ENCODE measurements at regions of chr11 and their contacts with region 1.

Region 1: DNA sequence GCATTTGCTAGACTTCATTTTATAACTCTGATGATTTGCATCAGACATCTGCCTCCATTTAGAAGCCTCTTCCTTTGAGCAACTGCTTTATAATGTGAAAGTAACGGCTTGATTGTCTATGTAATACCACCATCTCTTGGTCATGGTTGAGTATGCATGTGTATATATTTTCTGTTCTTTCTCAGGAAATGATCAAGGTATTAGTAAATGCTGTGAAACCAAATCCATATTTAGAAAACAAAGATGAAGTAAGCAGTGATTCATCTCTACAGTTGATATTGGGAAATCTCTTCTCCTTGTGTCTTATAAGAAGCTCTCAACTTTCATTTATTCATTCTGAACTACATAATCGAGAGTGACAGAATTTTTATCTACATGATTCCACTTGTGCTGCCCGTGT is 104.6 kb upstream of the ANO3 start:
- DNase-seq: peak; percentile 7
- H3K4me3 Mint-ChIP-seq: no peak overlapping the region
- H3K27ac Mint-ChIP-seq: no peak overlapping the region
- H3K4me1 Mint-ChIP-seq: peaks cover 13% of the 10 kb centered on the region
- H3K27me3 Mint-ChIP-seq: no peaks in the 10 kb centered on the region
- CTCF ChIP-seq: peak; percentile 39

Region 2: DNA sequence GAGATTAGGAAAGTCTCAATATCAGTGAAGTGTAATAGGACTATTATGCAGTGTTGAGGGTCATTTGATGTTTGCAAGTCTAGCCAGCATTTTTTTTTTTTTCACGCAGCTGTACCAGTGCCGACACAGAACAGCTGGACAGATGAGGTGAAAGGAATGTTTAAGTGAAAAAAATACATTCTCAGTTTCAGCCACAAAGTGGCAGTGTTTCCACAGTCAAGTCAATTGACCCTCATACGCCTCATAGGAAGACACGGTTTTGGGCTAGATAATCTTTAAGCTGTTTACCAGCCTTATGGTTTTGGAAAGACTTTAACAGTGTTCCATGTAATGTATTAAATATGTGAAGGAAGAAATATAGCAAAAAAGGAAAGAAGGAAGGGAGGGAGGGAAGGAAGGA is 245.3 kb before region 1 on chr11:
- CTCF ChIA-PET with region 1: interaction called, 37 read pairs
- intact Hi-C with region 1: loop called (anchors 1 kb)
- DNase-seq: peak; percentile 43
- H3K4me3 Mint-ChIP-seq: no peak overlapping the region
- H3K27ac Mint-ChIP-seq: peak overlapping the region; percentile 16
- H3K4me1 Mint-ChIP-seq: peaks cover 33% of the 10 kb centered on the region
- H3K27me3 Mint-ChIP-seq: no peaks in the 10 kb centered on the region
- CTCF ChIP-seq: peak; percentile 53

Region 3: GRCh38 chr11:26134481-26135355 is 92.6 kb before region 1 on chr11:
- CTCF ChIA-PET with region 1: interaction called, 3 read pairs
- intact Hi-C with region 1: loop called (anchors 2 kb)
- DNase-seq: peak; percentile 23
- H3K4me3 Mint-ChIP-seq: no peak overlapping the region
- H3K27ac Mint-ChIP-seq: no peak overlapping the region
- H3K4me1 Mint-ChIP-seq: peaks cover 8% of the 10 kb centered on the region
- H3K27me3 Mint-ChIP-seq: no peaks in the 10 kb centered on the region
- CTCF ChIP-seq: no peak

Region 4: DNA sequence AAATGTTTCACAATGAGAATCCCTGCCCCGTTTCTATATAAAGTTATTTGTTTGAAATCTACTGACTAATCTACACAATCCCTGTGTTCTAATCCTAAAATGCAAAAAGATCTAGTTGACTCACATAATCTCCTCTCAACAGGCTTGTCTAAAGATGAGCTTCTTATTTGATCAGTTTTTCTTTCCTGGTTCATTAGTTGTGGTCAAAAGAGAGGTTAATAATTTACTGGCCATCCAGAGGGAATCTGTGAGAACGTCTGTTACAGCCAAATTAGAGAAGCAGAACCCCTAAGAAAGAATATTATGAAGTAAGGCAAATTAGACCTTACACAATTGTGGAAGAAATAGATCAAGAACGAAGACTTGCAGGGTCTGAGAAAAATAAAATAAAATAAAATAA is 69.0 kb before region 1 on chr11:
- CTCF ChIA-PET with region 1: no interaction called
- intact Hi-C with region 1: loop called (anchors 5 kb)
- DNase-seq: no peak
- H3K4me3 Mint-ChIP-seq: no peak overlapping the region
- H3K27ac Mint-ChIP-seq: no peak overlapping the region
- H3K4me1 Mint-ChIP-seq: peaks cover 21% of the 10 kb centered on the region
- H3K27me3 Mint-ChIP-seq: no peaks in the 10 kb centered on the region
- CTCF ChIP-seq: no peak

Region 5: GRCh38 chr11:26276798-26277424 is 49.6 kb after region 1 on chr11:
- CTCF ChIA-PET with region 1: no interaction called
- intact Hi-C with region 1: loop called (anchors 1 kb)
- DNase-seq: peak; percentile 63
- H3K4me3 Mint-ChIP-seq: no peak overlapping the region
- H3K27ac Mint-ChIP-seq: no peak overlapping the region
- H3K4me1 Mint-ChIP-seq: peaks cover 7% of the 10 kb centered on the region
- H3K27me3 Mint-ChIP-seq: no peaks in the 10 kb centered on the region
- CTCF ChIP-seq: peak; percentile 92

Region 6: DNA sequence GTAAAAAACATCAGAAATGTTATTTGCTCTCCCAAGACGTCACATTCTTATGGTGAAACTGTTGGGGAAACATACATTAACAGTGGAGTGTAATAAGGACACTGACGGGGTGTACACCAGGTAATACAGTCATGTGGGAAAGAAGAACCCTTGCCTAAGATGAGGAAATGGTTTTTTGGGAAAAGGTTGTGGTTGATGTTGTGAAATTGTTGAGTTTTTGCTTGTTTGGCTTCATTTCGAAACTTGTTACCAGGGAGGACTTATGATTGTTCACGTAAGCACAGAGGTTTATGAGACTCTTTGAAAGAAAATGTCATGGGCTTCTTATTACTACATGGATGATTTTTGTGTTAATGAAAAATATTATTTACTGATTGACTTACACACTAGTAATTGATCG is 121.5 kb after region 1 on chr11:
- CTCF ChIA-PET with region 1: no interaction called
- intact Hi-C with region 1: no loop called
- DNase-seq: no peak
- H3K4me3 Mint-ChIP-seq: no peak overlapping the region
- H3K27ac Mint-ChIP-seq: no peak overlapping the region
- H3K4me1 Mint-ChIP-seq: no peaks in the 10 kb centered on the region
- H3K27me3 Mint-ChIP-seq: no peaks in the 10 kb centered on the region
- CTCF ChIP-seq: no peak